Activated CD4-positive, alpha-beta T cell treated with anti-CD3 and anti-CD28 coated beads for 36 hours (primary cell): ENCODE measurements at regions of chr19 and their contacts with region 1.

Region 1: GRCh38 chr19:16143399-16144245 is at the start of gene HSH2D:
- DNase-seq: peak; percentile 91
- ATAC-seq: peak; percentile 100
- H3K4me3 Mint-ChIP-seq: peak within 1 kb of the TSS; percentile 94
- H3K27ac Mint-ChIP-seq: peak within 1 kb of the TSS; percentile 93
- H3K4me1 Mint-ChIP-seq: peaks cover 24% of the 10 kb centered on the region
- H3K27me3 Mint-ChIP-seq: no peaks in the 10 kb centered on the region
- total RNA-seq, gene HSH2D: 31.2 to 38.2 TPM

Region 2: GRCh38 chr19:16001481-16002312 is 141.9 kb before region 1 on chr19:
- CTCF ChIA-PET with region 1: no interaction called
- POLR2A ChIA-PET with region 1: no interaction called
- intact Hi-C with region 1: no loop called
- DNase-seq: peak; percentile 69
- ATAC-seq: peak; percentile 98
- H3K4me3 Mint-ChIP-seq: peak overlapping the region; percentile 61
- H3K27ac Mint-ChIP-seq: peak overlapping the region; percentile 86
- H3K4me1 Mint-ChIP-seq: peaks cover 28% of the 10 kb centered on the region
- H3K27me3 Mint-ChIP-seq: no peaks in the 10 kb centered on the region

Region 3: DNA sequence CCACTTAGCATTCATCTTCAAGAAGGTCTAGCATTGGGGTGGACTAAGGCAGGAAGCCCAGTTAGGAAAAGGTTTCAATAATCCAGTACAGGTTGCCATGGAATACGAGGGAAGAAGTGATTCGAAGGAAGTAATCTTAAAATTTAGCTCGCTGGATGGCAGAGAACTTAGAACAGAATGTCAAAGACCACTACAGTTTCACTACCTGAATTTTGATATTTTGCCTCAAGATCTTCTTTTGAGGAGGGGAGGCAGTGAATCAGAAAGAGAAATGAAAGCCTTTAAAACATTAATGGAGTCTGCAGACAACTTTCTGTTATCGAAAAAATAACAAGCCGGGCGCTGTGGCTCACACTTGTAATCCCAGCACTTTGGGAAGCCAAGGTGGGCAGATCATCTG is 38.9 kb before region 1 on chr19:
- CTCF ChIA-PET with region 1: no interaction called
- POLR2A ChIA-PET with region 1: no interaction called
- intact Hi-C with region 1: no loop called
- DNase-seq: no peak
- ATAC-seq: no peak
- H3K4me3 Mint-ChIP-seq: no peak overlapping the region
- H3K27ac Mint-ChIP-seq: peak overlapping the region; percentile 35
- H3K4me1 Mint-ChIP-seq: no peaks in the 10 kb centered on the region
- H3K27me3 Mint-ChIP-seq: no peaks in the 10 kb centered on the region

Region 4: GRCh38 chr19:16118489-16119033 is 25.1 kb before region 1 on chr19:
- CTCF ChIA-PET with region 1: no interaction called
- POLR2A ChIA-PET with region 1: interaction called, 3 read pairs
- intact Hi-C with region 1: loop called in 1 of 2 experiments (anchors 1 kb)
- DNase-seq: peak; percentile 74
- ATAC-seq: peak; percentile 75
- H3K4me3 Mint-ChIP-seq: peak overlapping the region; percentile 35
- H3K27ac Mint-ChIP-seq: peak overlapping the region; percentile 89
- H3K4me1 Mint-ChIP-seq: peaks cover 59% of the 10 kb centered on the region
- H3K27me3 Mint-ChIP-seq: no peaks in the 10 kb centered on the region